HCT116 (cell line): ENCODE measurements at regions of chr17 and their contacts with region 1.

Region 1: GRCh38 chr17:56819431-56820145 is 14.1 kb downstream of the C17orf67 start:
- DNase-seq: peak; percentile 85
- ATAC-seq: peak; percentile 97
- H3K4me3 ChIP-seq: peak overlapping the region; percentile 25 to 29
- H3K27ac ChIP-seq: no peak overlapping the region
- H3K4me1 ChIP-seq: peaks cover 3 to 9% of the 10 kb centered on the region in 2 experiments
- H3K27me3 ChIP-seq: no peaks in the 10 kb centered on the region
- CTCF ChIP-seq: peak; percentile 80 to 95 (median 93)
- POLR2A ChIP-seq: no peak
- RAD21 ChIP-seq: peak; percentile 94

Region 2: DNA sequence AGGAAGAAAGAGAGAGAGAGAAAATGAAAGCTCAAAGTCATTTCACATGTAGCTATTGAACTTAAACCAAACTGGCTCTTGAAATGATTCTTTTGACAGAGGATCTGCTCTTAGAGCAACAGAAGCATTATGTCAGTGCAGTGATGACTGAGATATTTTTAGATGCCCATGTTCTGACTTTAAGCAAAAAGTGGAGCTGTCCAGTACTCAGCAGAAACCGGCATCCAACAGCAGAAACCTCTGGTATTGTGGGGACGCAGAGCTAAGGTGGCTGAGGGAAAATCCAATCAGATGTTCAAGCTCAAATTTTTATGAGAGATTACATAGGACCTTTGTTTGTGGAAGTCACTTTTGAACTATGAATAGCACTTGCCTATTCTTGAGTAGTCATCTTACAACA is 736.1 kb before region 1 on chr17:
- CTCF ChIA-PET with region 1: no interaction called
- POLR2A ChIA-PET with region 1: no interaction called
- RAD21 ChIA-PET with region 1: no interaction called
- intact Hi-C with region 1: no loop called
- DNase-seq: no peak
- ATAC-seq: no peak
- H3K4me3 ChIP-seq: no peak overlapping the region
- H3K27ac ChIP-seq: no peak overlapping the region
- H3K4me1 ChIP-seq: no peaks in the 10 kb centered on the region
- H3K27me3 ChIP-seq: peaks cover 7% of the 10 kb centered on the region; the same call in 1 of the 2 replicates
- CTCF ChIP-seq: no peak
- POLR2A ChIP-seq: no peak
- RAD21 ChIP-seq: no peak

Region 3: DNA sequence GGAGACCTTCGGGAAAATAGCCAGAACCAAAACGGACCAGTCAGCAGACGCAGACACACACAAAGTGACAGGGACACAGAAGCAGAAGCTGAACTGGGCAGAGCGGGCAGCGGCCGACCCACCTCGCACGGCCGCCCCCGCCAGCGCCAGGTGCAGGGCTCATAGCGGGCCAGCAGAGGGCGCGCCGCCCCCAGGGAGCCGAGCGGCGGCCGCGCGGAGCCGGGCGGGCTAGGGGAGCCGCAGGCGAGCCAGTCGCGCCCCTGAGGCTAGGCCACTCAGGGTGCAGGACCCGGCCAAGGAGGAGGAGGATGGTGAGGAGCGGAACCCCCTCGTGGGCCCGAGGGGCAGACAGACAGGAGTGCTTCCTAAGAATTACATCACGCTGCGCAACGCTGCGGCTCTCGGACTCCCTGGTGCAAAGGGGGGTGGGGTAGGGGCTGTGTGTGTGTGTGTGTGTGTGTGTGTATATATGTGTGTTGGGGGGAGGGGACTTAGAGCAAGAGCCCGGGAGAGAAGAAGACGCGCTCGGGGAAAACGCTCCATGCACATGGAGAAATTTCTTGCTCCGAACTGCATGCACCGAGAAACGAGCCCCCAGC is 227.0 kb before region 1 on chr17:
- CTCF ChIA-PET with region 1: interaction called, 6 read pairs
- POLR2A ChIA-PET with region 1: no interaction called
- RAD21 ChIA-PET with region 1: no interaction called
- intact Hi-C with region 1: loop called (anchors 1 kb)
- DNase-seq: no peak
- ATAC-seq: peak; percentile 80
- H3K4me3 ChIP-seq: peak overlapping the region; percentile 60 to 71
- H3K27ac ChIP-seq: no peak overlapping the region
- H3K4me1 ChIP-seq: peaks cover 5 to 21% of the 10 kb centered on the region in 2 experiments; a peak in 2 of 4 replicates
- H3K27me3 ChIP-seq: peaks cover 35% of the 10 kb centered on the region; the same call in 1 of the 2 replicates
- CTCF ChIP-seq: peak; percentile 72 to 98 (median 76)
- POLR2A ChIP-seq: no peak
- RAD21 ChIP-seq: peak; percentile 87

Region 4: DNA sequence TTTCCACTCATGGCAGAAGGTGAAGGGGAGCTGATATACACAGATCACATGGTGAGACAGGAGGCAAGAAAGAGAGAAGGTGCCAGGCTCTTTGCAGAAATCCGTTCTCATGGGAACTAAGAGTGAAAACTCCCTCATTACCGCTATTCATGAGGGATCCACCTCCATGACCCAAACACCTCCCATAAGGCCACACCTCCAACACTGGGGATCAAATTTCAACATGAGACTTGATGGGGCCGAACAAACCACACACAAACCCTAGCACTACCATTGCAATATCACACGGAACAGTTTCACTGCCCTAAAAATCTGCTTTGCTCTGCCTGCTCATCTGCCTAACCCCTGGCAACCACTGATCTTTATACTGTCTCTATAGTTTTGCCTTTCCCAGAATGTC is 20.7 kb before region 1 on chr17:
- CTCF ChIA-PET with region 1: interaction called, 11 read pairs
- POLR2A ChIA-PET with region 1: no interaction called
- RAD21 ChIA-PET with region 1: no interaction called
- intact Hi-C with region 1: no loop called
- DNase-seq: no peak
- ATAC-seq: peak; percentile 59; the same call in 1 of the 2 replicates
- H3K4me3 ChIP-seq: no peak overlapping the region
- H3K27ac ChIP-seq: no peak overlapping the region
- H3K4me1 ChIP-seq: peaks cover 5% of the 10 kb centered on the region in 2 experiments; a peak in 1 of 4 replicates
- H3K27me3 ChIP-seq: peaks cover 6% of the 10 kb centered on the region; the same call in 1 of the 2 replicates
- CTCF ChIP-seq: no peak
- POLR2A ChIP-seq: no peak
- RAD21 ChIP-seq: no peak

Region 5: DNA sequence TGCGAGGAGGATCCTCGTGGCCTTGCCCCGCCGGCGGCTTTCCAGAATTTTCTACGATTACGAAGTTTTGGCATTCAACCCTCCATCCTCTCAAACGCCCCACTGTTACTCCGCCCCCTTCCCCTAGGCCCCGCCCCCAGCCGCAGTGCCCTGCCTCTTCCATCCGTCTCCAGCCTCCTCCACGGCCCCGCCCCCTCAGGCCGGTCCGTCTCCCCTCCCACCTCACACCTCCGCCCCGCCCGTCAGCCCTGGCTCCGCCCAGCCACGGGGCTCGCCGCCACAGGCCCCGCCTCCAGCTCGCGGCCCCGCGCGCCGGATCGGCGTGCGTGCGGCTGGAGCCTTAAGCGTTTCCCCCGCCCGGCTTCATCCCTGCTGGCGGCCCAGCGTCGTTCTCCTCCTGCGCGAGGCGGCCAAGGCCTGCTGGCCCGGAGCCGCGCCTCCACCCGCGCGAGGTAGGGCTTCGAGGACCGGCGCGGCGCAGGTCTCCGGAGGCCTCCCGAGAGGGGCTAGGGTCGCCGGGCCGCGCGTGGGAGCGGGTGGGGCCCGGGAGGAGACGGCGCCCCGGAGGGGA is 14.3 kb after region 1 on chr17 and contains the starts of genes C17orf67 and DGKE:
- CTCF ChIA-PET with region 1: interaction called, 11 read pairs
- POLR2A ChIA-PET with region 1: interaction called, 4 read pairs
- RAD21 ChIA-PET with region 1: interaction called in 1 of 2 experiments, 3 read pairs
- intact Hi-C with region 1: no loop called
- DNase-seq: peak; percentile 88
- ATAC-seq: peak; percentile 96
- H3K4me3 ChIP-seq: peak within 1 kb of the TSS; percentile 63 to 65
- H3K27ac ChIP-seq: peak within 1 kb of the TSS; percentile 74
- H3K4me1 ChIP-seq: peaks cover 9 to 21% of the 10 kb centered on the region in 2 experiments
- H3K27me3 ChIP-seq: no peaks in the 10 kb centered on the region
- CTCF ChIP-seq: no peak
- POLR2A ChIP-seq: no peak
- RAD21 ChIP-seq: no peak
- total RNA-seq, gene C17orf67: 0.84 TPM
- total RNA-seq, gene DGKE: 5.2 TPM

Region 6: GRCh38 chr17:56939901-56940343 is 120.3 kb after region 1 on chr17:
- CTCF ChIA-PET with region 1: interaction called, 25 read pairs
- POLR2A ChIA-PET with region 1: no interaction called
- RAD21 ChIA-PET with region 1: interaction called in 1 of 2 experiments, 6 read pairs
- intact Hi-C with region 1: loop called (anchors 1 kb)
- DNase-seq: peak; percentile 50
- ATAC-seq: peak; percentile 89
- H3K4me3 ChIP-seq: no peak overlapping the region
- H3K27ac ChIP-seq: no peak overlapping the region
- H3K4me1 ChIP-seq: peaks cover 4 to 6% of the 10 kb centered on the region in 2 experiments; a peak in 1 of 4 replicates
- H3K27me3 ChIP-seq: no peaks in the 10 kb centered on the region
- CTCF ChIP-seq: peak; percentile 73 to 91 (median 84)
- POLR2A ChIP-seq: no peak
- RAD21 ChIP-seq: peak; percentile 94